ENCODE measurements at regions of chr10 and their contacts with region 1.

Region 1: DNA sequence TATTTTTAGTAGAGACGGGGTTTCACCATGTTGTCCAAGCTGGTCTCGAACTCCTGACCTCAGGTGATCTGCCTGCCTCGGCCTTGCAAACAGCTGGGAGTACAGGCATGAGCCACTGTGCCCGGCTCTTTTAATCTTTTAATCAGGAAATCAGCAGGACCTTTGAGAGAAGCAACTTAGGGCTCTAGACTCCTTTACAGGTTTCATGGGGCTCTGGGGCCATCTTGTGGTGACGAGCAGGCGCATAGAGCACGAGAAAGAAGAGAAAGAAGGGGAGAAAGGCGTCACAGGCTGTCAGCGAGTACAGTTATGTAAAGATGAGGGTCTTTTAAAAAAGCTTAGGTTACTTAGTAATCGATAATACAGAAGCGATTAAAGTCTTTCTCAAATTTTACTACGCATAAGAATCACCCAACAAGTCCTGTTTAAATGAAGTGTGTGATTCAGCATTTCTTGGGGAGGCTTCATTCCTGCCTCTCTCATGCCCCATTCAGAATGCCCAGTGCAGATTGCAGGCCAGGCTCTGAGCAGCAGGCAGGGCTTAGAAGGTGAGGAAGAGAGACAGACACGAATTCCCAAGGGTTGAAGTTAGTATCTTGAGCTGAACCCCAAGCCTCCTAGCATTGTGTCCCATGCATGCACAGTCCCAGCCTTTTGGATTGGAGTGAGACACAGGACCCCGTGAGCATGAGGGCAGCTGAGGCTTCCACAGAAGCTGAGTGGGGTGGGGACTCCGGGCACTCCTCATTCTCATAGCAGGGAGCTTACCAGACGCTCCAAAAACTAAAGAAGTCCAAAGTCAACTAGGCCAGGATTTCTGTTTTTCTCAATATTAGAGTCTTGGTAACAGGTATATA is 23.6 kb upstream of the PFKP start:
- DNase-seq: peak; percentile 54 to 73 (median 65)
- ATAC-seq: peak; percentile 34 to 80 (median 76)
- H3K4me3 ChIP-seq: no peak overlapping the region
- H3K27ac ChIP-seq: peak overlapping the region in 6 of 12 donors; percentile 16 to 78 (median 50)
- H3K4me1 ChIP-seq: peaks cover 0 to 20% (median 10%) of the 10 kb centered on the region in 12 donors
- H3K27me3 ChIP-seq: peaks cover 0 to 4% (median 0%) of the 10 kb centered on the region in 9 donors
- CTCF ChIP-seq: peak; percentile 46 to 81 (median 74)
- POLR2A ChIP-seq: no peak

Region 2: GRCh38 chr10:1420661-1421362 is 1622.9 kb before region 1 on chr10:
- intact Hi-C with region 1: loop called in 1 of 10 experiments (anchors 10 kb)
- DNase-seq: peak in 1 of 5 donors; percentile 60
- ATAC-seq: peak in 3 of 4 donors; percentile 50 to 69 (median 61)
- H3K4me3 ChIP-seq: no peak overlapping the region
- H3K27ac ChIP-seq: no peak overlapping the region
- H3K4me1 ChIP-seq: peaks cover 0 to 4% (median 0%) of the 10 kb centered on the region in 12 donors
- H3K27me3 ChIP-seq: peaks cover 0 to 59% (median 11%) of the 10 kb centered on the region in 9 donors
- CTCF ChIP-seq: peak in 11 of 12 donors; percentile 32 to 58 (median 49)
- POLR2A ChIP-seq: no peak

Region 3: GRCh38 chr10:2839081-2839725 is 204.5 kb before region 1 on chr10:
- intact Hi-C with region 1: loop called in 3 of 10 experiments (anchors 5 kb)
- DNase-seq: no peak
- ATAC-seq: no peak
- H3K4me3 ChIP-seq: no peak overlapping the region
- H3K27ac ChIP-seq: no peak overlapping the region
- H3K4me1 ChIP-seq: no peaks in the 10 kb centered on the region
- H3K27me3 ChIP-seq: peaks cover 0 to 22% (median 0%) of the 10 kb centered on the region in 9 donors
- CTCF ChIP-seq: peak in 11 of 12 donors; percentile 10 to 54 (median 37)
- POLR2A ChIP-seq: no peak

Region 4: GRCh38 chr10:2927958-2928840 is 115.5 kb before region 1 on chr10:
- intact Hi-C with region 1: loop called (anchors 2 to 5 kb)
- DNase-seq: peak in 4 of 5 donors; percentile 47 to 67 (median 60)
- ATAC-seq: peak in 3 of 4 donors; percentile 73 to 83 (median 82)
- H3K4me3 ChIP-seq: no peak overlapping the region
- H3K27ac ChIP-seq: no peak overlapping the region
- H3K4me1 ChIP-seq: peaks cover 0 to 11% (median 0%) of the 10 kb centered on the region in 12 donors
- H3K27me3 ChIP-seq: peaks cover 0 to 27% (median 3%) of the 10 kb centered on the region in 9 donors
- CTCF ChIP-seq: peak; percentile 53 to 72 (median 66)
- POLR2A ChIP-seq: no peak